CD14-positive monocyte (primary cell): ENCODE measurements at regions of chr7 and their contacts with region 1.

Region 1: DNA sequence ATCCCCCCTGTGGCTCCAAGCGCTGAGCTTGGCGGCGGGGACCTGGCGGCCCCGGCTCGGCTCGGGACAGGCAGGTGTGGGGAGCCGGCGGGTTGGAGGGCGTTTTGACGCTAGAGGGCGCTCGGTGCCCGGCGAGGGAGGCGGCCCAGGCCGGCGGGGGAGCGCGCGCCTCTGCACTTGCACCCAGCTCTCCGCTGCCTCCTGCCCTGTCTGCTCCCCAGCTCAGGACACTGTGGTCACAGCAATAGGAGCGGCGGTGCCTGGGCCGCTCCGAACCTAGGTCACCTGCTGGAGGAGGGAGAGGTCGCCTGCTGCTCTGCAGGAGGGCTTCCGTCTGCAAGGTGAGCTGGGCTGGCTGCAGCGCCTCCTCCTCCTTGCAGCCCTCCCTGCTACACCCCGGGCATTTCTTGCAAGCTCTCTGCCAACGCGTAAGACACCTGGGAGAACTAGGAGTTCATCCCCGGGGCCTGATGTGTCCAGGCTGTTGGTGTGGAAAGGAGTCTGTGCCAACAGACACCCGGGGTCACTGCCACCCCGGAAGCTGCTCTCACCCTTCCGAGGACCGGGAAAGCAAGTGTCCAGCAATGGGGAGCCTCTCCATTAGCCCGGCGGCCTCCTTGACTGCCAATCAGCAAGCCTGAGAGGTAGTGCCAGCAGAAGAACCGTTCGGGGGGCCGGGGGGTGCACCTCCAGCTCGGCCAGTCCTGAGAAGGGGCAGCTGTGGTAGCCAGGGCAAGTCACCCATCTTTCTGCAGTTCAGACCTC is 620.4 kb downstream of the GALNT17 start:
- DNase-seq: peak in 2 of 3 donors; percentile 6 to 21
- H3K4me3 ChIP-seq: no peak overlapping the region
- H3K4me3 Mint-ChIP-seq: no peak overlapping the region
- H3K27ac ChIP-seq: no peak overlapping the region
- H3K27ac Mint-ChIP-seq: no peak overlapping the region
- H3K4me1 ChIP-seq: peaks cover 0 to 4% of the 10 kb centered on the region in 2 donors
- H3K4me1 Mint-ChIP-seq: peaks cover 3% of the 10 kb centered on the region
- H3K27me3 ChIP-seq: peaks cover 0 to 7% of the 10 kb centered on the region in 2 donors
- H3K27me3 Mint-ChIP-seq: peaks cover 6 to 17% (median 7%) of the 10 kb centered on the region in 3 donors
- CTCF ChIP-seq: peak; percentile 80

Region 2: GRCh38 chr7:71846160-71846559 is 93.8 kb after region 1 on chr7:
- intact Hi-C with region 1: no loop called
- DNase-seq: no peak
- H3K4me3 ChIP-seq: no peak overlapping the region
- H3K4me3 Mint-ChIP-seq: no peak overlapping the region
- H3K27ac ChIP-seq: no peak overlapping the region
- H3K27ac Mint-ChIP-seq: no peak overlapping the region
- H3K4me1 ChIP-seq: no peaks in the 10 kb centered on the region
- H3K4me1 Mint-ChIP-seq: no peaks in the 10 kb centered on the region
- H3K27me3 ChIP-seq: no peaks in the 10 kb centered on the region
- H3K27me3 Mint-ChIP-seq: peaks cover 0 to 1% (median 0%) of the 10 kb centered on the region in 3 donors
- CTCF ChIP-seq: no peak

Region 3: GRCh38 chr7:72493850-72494661 is 741.7 kb after region 1 on chr7:
- intact Hi-C with region 1: loop called (anchors 2 to 5 kb)
- DNase-seq: peak; percentile 11 to 29 (median 21)
- H3K4me3 ChIP-seq: no peak overlapping the region
- H3K4me3 Mint-ChIP-seq: no peak overlapping the region
- H3K27ac ChIP-seq: no peak overlapping the region
- H3K27ac Mint-ChIP-seq: no peak overlapping the region
- H3K4me1 ChIP-seq: no peaks in the 10 kb centered on the region
- H3K4me1 Mint-ChIP-seq: no peaks in the 10 kb centered on the region
- H3K27me3 ChIP-seq: no peaks in the 10 kb centered on the region
- H3K27me3 Mint-ChIP-seq: peaks cover 0 to 3% (median 0%) of the 10 kb centered on the region in 3 donors
- CTCF ChIP-seq: peak; percentile 88